ENCODE measurements at regions of chrX and their contacts with region 1.

Region 1: GRCh38 chrX:65866146-65866545 is 173.7 kb downstream of the VSIG4 start:
- DNase-seq: peak; percentile 58
- H3K4me3 Mint-ChIP-seq: no peak overlapping the region
- H3K27ac Mint-ChIP-seq: peak overlapping the region; percentile 58
- H3K4me1 Mint-ChIP-seq: peaks cover 36% of the 10 kb centered on the region
- H3K27me3 Mint-ChIP-seq: no peaks in the 10 kb centered on the region

Region 2: DNA sequence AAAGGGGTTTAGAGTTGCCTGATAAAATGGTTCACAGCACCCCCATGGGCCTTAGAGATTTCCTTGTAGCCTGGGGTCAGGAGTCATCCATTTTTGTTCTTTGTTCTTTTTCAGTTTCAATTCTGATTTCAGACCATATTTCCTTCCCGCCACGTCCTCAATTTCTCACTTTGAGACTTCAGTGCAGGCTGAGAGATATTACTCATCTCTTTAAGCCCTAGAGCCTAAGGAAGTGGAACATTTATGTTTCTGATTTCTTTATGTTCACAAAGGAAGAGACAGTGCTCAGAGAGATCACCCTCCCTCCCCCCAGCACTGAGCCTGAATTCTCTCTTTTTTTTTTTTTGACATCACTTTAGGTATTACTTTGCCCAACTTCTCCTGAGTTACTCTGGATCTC is 142.4 kb before region 1 on chrX:
- CTCF ChIA-PET with region 1: interaction called, 3 read pairs
- intact Hi-C with region 1: loop called (anchors 1 kb)
- DNase-seq: peak; percentile 60
- H3K4me3 Mint-ChIP-seq: peak overlapping the region; percentile 29
- H3K27ac Mint-ChIP-seq: peak overlapping the region; percentile 88
- H3K4me1 Mint-ChIP-seq: peaks cover 88% of the 10 kb centered on the region
- H3K27me3 Mint-ChIP-seq: no peaks in the 10 kb centered on the region

Region 3: GRCh38 chrX:65910899-65911298 is 44.8 kb after region 1 on chrX:
- CTCF ChIA-PET with region 1: no interaction called
- intact Hi-C with region 1: no loop called
- DNase-seq: no peak
- H3K4me3 Mint-ChIP-seq: no peak overlapping the region
- H3K27ac Mint-ChIP-seq: no peak overlapping the region
- H3K4me1 Mint-ChIP-seq: no peaks in the 10 kb centered on the region
- H3K27me3 Mint-ChIP-seq: no peaks in the 10 kb centered on the region

Region 4: DNA sequence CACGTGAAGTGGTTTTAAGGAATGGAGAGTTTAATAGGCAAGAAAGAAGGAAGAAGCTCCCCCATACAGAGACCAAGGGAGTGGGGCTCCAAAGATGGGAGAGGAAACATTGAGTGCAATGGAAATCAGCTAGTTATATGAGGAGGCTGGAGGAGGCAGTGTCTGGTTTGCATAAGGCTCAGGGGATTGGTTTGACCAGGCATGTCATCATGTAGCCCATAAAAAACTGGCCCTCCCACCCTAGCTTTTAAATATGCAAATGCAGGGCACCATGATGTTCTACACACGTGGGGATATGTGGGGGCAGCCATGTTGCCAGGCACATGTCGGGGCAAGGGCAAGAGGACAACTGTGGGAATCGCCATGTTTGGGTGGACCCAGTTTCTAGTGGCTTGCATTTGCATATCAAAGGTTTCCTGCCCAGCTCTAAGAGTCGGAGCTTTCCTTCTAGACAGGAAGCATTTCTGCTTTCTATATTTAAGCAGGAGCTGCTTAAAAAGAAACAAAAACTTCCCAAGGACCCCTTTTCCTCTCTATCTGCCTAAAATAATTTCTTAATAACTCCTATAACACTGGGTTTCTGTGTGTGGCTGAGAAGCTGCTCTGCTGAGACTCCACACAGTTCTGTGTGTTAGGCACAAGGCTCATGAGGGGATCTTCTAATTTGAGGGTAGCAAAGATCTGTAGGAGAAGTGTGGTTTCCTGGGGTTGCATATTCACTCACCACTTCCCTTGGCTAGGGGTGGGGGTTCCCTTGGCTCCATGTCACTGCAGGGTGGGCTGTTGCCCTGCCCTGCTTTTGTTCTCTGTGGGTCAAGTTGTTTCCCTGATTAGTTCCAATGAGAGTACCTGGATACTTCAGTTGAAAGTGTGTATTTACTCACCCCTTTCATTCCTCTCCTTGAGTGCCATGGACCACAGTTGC is 60.2 kb after region 1 on chrX:
- CTCF ChIA-PET with region 1: no interaction called
- intact Hi-C with region 1: loop called (anchors 1 kb)
- DNase-seq: peak; percentile 61
- H3K4me3 Mint-ChIP-seq: peak overlapping the region; percentile 34
- H3K27ac Mint-ChIP-seq: peak overlapping the region; percentile 69
- H3K4me1 Mint-ChIP-seq: peaks cover 57% of the 10 kb centered on the region
- H3K27me3 Mint-ChIP-seq: no peaks in the 10 kb centered on the region

Region 5: DNA sequence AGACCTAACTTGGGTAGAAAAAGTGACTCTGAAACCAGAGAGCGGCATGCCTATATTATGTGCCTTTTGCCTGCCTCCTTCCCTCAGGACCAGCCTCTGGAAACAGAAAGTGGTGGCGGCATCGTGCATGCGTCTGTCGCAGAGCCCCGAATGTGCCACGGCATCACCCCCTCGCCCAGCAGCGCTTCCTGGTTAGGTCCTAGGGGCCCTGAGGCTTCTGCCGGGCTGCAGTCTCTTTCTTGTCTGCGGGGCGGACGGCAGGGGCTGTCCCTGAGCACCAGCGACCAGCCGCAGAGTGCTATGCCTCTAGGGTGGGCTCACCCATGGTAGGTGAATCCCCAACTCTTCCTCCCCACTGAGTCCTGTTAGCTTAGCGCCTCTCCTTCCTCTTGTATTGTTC is 105.0 kb after region 1 on chrX:
- CTCF ChIA-PET with region 1: no interaction called
- intact Hi-C with region 1: no loop called
- DNase-seq: no peak
- H3K4me3 Mint-ChIP-seq: no peak overlapping the region
- H3K27ac Mint-ChIP-seq: no peak overlapping the region
- H3K4me1 Mint-ChIP-seq: no peaks in the 10 kb centered on the region
- H3K27me3 Mint-ChIP-seq: no peaks in the 10 kb centered on the region

Region 6: DNA sequence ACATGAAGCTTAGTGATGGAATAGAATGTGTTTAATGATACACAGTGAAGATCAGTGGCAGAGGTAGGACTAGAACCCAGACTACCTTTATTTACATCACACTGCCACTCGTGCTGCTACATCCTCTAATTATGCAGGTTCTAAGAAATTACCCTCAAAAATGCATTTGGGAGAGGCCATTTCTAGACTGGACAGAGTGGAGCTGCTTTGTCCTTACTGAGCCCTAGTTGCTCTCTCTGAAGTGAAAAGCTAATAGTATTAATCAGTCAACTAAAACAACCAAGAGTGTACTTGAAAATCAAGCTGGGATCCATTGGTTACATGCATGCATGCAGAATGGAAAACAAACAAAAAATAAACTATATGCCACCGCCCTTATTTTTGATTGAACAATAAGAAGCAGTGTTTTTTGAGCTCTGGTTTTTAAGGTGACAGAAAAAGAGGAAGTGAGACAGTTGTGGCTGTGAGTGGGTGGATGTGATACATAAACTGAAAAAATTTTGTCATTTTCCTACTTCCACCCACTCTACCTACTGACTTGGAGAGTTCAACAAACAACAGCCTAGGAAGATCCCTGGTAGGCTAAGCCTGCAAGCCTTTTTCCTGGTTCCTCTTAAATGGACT is 180.6 kb after region 1 on chrX:
- CTCF ChIA-PET with region 1: no interaction called
- intact Hi-C with region 1: loop called (anchors 1 kb)
- DNase-seq: peak; percentile 69
- H3K4me3 Mint-ChIP-seq: no peak overlapping the region
- H3K27ac Mint-ChIP-seq: peak overlapping the region; percentile 91
- H3K4me1 Mint-ChIP-seq: peaks cover 30% of the 10 kb centered on the region
- H3K27me3 Mint-ChIP-seq: no peaks in the 10 kb centered on the region

Region 7: DNA sequence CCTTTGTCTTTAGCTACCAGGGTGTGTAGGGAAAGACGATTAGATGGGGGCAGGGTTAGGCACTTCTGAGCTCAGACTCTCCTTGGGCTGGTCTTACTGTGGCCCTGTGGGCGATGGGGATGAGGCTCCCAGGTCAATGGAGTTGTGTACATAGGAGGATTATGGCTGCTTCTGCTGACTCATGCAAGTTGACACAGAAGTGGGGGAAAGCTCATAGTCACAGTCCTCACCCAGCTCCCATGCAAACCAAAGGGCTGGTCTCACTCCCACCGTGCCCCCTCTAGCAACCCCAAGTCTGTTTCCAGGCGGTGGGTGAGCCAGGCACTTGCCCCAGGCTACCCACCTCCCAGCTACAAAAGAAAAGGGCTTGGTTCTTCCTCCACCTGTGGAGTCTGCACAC is 198.1 kb after region 1 on chrX:
- CTCF ChIA-PET with region 1: no interaction called
- intact Hi-C with region 1: no loop called
- DNase-seq: no peak
- H3K4me3 Mint-ChIP-seq: no peak overlapping the region
- H3K27ac Mint-ChIP-seq: no peak overlapping the region
- H3K4me1 Mint-ChIP-seq: peaks cover 35% of the 10 kb centered on the region
- H3K27me3 Mint-ChIP-seq: no peaks in the 10 kb centered on the region